ENCODE measurements at regions of chrX and their contacts with region 1.

Region 1: DNA sequence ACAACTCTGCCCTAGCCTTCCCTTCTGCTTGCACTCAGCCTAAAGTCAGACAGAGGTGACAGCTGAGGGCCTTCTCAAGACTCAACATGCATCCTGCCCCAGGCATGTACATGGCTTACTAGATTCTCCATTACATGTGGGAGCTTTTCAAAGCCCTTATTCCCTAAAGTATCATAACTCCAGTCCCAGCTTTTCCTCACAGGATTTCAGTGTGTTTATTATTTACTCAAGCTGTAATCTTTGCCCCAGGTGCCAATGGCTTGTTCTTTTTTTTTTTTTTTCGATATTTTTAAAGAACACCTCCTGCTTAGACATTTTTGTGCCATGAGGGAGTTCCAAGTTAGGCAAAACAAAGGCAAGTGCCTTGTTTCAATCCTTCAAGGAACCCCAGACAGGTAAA is 154.0 kb upstream of the RADX start:
- DNase-seq: no peak
- H3K4me3 Mint-ChIP-seq: no peak overlapping the region
- H3K27ac Mint-ChIP-seq: no peak overlapping the region
- H3K4me1 Mint-ChIP-seq: no peaks in the 10 kb centered on the region
- H3K27me3 Mint-ChIP-seq: peaks cover 1% of the 10 kb centered on the region

Region 2: GRCh38 chrX:106249706-106250379 is 208.0 kb before region 1 on chrX:
- intact Hi-C with region 1: no loop called
- DNase-seq: no peak
- H3K4me3 Mint-ChIP-seq: no peak overlapping the region
- H3K27ac Mint-ChIP-seq: no peak overlapping the region
- H3K4me1 Mint-ChIP-seq: no peaks in the 10 kb centered on the region
- H3K27me3 Mint-ChIP-seq: no peaks in the 10 kb centered on the region

Region 3: DNA sequence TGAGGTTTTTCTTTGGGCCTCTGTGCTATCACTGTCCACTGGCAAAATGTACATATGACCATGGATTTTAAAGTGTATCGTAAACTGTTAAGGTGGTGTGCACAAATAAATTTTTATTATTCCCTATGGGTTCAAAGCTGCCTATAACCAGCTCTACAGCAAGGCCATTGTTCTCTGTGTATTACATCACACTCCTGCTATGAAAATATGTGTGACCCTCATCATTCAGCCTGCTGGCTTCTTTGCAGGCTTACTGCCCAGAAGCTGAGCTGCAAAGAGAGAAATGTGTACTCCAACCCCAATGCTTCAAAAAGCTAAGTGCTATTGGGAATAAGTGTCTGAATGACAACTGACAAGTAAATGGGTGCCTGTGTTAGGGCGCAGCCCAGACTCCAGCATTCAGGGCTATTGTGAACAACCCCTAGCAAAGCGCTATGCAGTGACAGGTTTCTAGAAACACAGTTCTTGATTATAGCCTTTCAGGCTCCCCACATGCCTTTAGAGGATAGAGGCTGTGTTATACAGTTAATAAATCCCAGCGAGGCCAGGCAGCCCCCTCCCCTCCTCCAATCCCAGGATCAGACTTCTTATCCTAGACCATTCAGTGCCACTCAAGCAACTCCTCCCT is 66.4 kb before region 1 on chrX:
- intact Hi-C with region 1: no loop called
- DNase-seq: no peak
- H3K4me3 Mint-ChIP-seq: no peak overlapping the region
- H3K27ac Mint-ChIP-seq: no peak overlapping the region
- H3K4me1 Mint-ChIP-seq: no peaks in the 10 kb centered on the region
- H3K27me3 Mint-ChIP-seq: no peaks in the 10 kb centered on the region

Region 4: DNA sequence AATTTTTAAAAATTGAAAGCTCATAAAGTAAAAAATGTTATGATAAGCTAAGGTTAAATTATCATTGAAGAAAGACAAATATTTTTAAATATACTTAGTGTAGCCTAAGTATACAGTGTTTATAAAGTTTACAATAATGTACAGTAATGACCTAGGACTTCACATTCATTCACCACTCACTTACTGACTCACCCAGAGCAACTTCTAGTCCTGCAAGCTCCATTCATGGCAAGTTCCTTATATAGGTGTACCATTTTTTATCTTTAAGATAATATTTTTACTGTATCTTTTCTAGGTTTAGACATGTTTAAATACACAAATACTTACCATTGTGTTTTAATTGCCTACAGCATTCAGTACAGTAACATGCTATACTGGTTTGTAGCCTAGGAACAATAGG is 41.7 kb after region 1 on chrX:
- intact Hi-C with region 1: loop called (anchors 5 kb)
- DNase-seq: no peak
- H3K4me3 Mint-ChIP-seq: no peak overlapping the region
- H3K27ac Mint-ChIP-seq: no peak overlapping the region
- H3K4me1 Mint-ChIP-seq: peaks cover 3% of the 10 kb centered on the region
- H3K27me3 Mint-ChIP-seq: no peaks in the 10 kb centered on the region

Measured in activated CD4-positive, alpha-beta T cell treated with anti-CD3 and anti-CD28 coated beads, Interleukin-2, amount 10 ng/mL, durations not matched to agents 24 days and 14 days (primary cell).